ENCODE measurements at regions of chr1 and their contacts with region 1.

Region 1: GRCh38 chr1:201042779-201043461 is 19.4 kb upstream of the KIF21B start:
- DNase-seq: peak; percentile 89
- H3K4me3 Mint-ChIP-seq: no peak overlapping the region
- H3K27ac Mint-ChIP-seq: no peak overlapping the region
- H3K4me1 Mint-ChIP-seq: no peaks in the 10 kb centered on the region
- H3K27me3 Mint-ChIP-seq: peaks cover 33% of the 10 kb centered on the region
- CTCF ChIP-seq: peak; percentile 98

Region 2: DNA sequence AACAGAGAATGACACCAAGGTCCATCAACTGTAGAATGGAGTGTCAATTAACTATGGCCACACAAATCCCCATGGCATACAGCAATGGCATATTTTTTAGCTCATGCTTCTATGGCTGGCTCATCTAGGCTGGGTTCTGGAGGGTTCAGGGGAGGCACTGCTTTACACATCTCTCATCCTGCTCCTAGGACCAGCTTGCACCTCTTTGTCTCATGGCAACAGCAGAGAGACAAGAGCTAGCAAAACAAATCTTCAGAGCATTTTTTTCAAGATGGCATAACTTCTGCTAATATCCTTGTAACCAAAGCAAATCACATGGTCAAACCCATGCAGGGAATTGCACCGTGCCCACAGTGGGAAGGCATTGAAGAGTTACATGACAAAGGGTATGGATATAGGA is 504.7 kb before region 1 on chr1:
- CTCF ChIA-PET with region 1: no interaction called
- POLR2A ChIA-PET with region 1: no interaction called
- intact Hi-C with region 1: loop called (anchors 5 kb)
- DNase-seq: no peak
- H3K4me3 Mint-ChIP-seq: no peak overlapping the region
- H3K27ac Mint-ChIP-seq: no peak overlapping the region
- H3K4me1 Mint-ChIP-seq: peaks cover 6% of the 10 kb centered on the region
- H3K27me3 Mint-ChIP-seq: no peaks in the 10 kb centered on the region
- CTCF ChIP-seq: no peak

Region 3: GRCh38 chr1:200837931-200838571 is 204.9 kb before region 1 on chr1:
- CTCF ChIA-PET with region 1: interaction called, 6 read pairs
- POLR2A ChIA-PET with region 1: no interaction called
- intact Hi-C with region 1: loop called (anchors 1 kb)
- DNase-seq: peak; percentile 45
- H3K4me3 Mint-ChIP-seq: no peak overlapping the region
- H3K27ac Mint-ChIP-seq: no peak overlapping the region
- H3K4me1 Mint-ChIP-seq: peaks cover 16% of the 10 kb centered on the region
- H3K27me3 Mint-ChIP-seq: no peaks in the 10 kb centered on the region
- CTCF ChIP-seq: peak; percentile 67

Region 4: DNA sequence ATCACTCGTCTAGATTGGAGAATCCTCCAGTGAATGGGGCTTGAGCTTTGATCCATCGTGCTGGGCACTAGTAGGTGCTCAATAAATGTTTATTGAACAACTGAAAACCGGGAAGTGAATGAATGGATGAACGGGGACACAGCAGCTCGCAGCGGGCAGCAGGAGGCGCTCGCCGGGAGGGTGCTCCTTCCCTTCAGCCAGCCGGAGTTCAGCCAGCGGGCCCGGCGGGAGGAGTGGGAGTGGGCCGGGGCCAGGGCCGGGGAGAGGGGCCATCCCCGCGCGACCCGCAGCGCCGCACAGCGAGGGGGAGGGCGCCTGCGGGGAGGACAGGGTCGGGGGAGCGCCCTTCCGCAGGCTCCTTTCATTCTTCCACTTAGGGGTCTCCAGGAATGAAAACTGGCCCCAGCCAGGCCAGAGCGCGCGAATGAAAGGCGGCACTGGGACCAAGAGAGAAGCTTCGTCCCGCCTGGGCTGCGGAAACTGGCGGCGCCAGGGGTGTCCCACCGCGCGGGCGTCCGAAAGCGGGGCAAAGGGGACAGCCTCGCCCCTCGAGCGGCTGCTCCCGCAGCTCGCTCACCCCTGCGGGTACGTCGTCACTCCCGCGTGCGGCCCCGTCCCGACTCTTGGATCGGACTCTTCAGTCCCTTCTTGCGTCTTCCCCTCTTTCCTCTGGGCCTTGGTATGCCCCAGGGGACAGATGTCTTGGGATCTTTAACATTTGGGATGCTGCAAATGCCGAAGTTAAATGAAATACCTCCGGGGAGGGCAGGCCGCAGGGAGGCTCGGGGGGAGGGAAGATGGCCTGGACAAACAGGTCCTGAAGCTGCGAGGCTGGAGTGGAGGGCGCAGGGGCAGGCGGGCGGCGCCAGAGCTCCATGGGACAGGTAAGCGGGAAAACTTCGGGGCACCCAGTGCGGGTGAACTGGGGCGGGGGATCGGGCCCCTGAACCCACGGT is 151.8 kb before region 1 on chr1:
- CTCF ChIA-PET with region 1: interaction called, 17 read pairs
- POLR2A ChIA-PET with region 1: interaction called, 7 read pairs
- intact Hi-C with region 1: loop called (anchors 2 kb)
- DNase-seq: peak; percentile 81
- H3K4me3 Mint-ChIP-seq: peak overlapping the region; percentile 80
- H3K27ac Mint-ChIP-seq: peak overlapping the region; percentile 83
- H3K4me1 Mint-ChIP-seq: peaks cover 59% of the 10 kb centered on the region
- H3K27me3 Mint-ChIP-seq: no peaks in the 10 kb centered on the region
- CTCF ChIP-seq: peak; percentile 61

Region 5: GRCh38 chr1:200979574-200980451 is 63.1 kb before region 1 on chr1:
- CTCF ChIA-PET with region 1: interaction called, 22 read pairs
- POLR2A ChIA-PET with region 1: no interaction called
- intact Hi-C with region 1: loop called (anchors 1 kb)
- DNase-seq: peak; percentile 75
- H3K4me3 Mint-ChIP-seq: no peak overlapping the region
- H3K27ac Mint-ChIP-seq: no peak overlapping the region
- H3K4me1 Mint-ChIP-seq: no peaks in the 10 kb centered on the region
- H3K27me3 Mint-ChIP-seq: no peaks in the 10 kb centered on the region
- CTCF ChIP-seq: peak; percentile 96

Region 6: DNA sequence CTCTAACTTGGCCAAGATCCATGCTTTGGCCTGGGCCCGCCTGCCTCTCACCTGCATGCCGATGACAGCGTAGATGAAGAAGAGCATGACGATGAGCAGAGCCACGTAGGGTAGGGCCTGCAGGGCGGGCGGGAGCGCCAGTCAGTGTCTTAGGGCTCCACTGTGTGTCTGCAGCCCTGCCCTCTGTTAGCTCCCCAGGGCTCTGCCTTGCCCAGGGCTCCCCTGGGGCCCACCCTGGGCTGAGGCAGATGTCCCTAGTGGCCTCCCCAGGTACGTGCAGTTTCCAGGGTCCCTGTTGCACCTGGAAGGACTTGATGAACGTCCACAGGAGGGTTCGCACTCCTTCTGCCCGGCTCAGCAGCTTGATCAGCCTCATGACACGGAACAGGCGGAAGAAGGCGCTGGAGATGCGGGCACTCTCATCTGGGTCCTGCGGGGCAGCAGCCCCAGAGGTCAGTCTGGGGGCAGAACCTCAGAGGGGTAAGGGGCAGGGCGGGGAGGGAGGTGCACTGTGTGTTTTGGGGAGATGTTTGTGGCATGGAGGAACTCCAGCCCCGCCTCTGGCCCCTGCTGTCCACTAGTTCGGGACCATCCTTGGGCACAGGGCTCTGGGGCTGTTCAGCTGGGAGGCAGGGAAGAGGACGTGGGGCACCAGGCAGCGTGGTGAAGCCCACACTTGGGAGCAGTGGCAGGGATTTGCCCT is 10.4 kb after region 1 on chr1:
- CTCF ChIA-PET with region 1: interaction called, 27 read pairs
- POLR2A ChIA-PET with region 1: no interaction called
- intact Hi-C with region 1: no loop called
- DNase-seq: no peak
- H3K4me3 Mint-ChIP-seq: no peak overlapping the region
- H3K27ac Mint-ChIP-seq: no peak overlapping the region
- H3K4me1 Mint-ChIP-seq: no peaks in the 10 kb centered on the region
- H3K27me3 Mint-ChIP-seq: peaks cover 65% of the 10 kb centered on the region
- CTCF ChIP-seq: peak; percentile 22